ENCODE measurements at regions of chr17 and their contacts with region 1.

Region 1: DNA sequence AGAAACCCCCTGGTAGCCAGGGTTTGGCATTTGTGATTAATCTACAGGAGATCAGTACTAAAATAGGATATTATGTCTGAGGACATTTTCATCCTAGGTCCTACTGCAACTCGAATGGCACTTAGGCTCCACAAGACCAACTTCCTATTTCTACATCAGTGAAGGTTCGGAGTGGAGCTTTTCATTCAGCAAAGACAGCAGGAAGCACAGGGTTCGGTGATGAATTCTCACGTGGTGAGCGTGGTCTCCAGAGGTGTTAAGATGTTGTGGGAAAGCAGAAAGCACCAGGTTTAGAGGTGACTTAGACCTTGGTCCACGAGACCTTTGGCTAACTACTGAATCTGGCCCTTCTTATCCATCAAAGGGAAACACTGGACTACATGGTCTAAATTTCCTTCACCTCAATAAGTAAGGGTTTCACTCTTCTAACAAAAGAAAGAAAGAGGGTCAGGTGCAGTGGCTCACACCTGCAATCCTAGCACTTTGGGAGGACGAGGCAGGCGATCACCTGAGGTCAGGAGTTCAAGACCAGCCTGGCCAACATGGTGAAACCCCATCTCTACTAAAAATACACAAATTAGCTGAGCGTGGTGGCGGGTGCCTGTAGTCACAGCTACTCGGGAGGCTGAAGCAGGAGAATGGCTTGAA is 13.9 kb upstream of the HELZ start:
- DNase-seq: peak; percentile 59
- ATAC-seq: peak; percentile 64
- H3K4me3 Mint-ChIP-seq: peak overlapping the region; percentile 42
- H3K27ac Mint-ChIP-seq: peak overlapping the region; percentile 76
- H3K4me1 Mint-ChIP-seq: peaks cover 41% of the 10 kb centered on the region
- H3K27me3 Mint-ChIP-seq: peaks cover 8% of the 10 kb centered on the region

Region 2: DNA sequence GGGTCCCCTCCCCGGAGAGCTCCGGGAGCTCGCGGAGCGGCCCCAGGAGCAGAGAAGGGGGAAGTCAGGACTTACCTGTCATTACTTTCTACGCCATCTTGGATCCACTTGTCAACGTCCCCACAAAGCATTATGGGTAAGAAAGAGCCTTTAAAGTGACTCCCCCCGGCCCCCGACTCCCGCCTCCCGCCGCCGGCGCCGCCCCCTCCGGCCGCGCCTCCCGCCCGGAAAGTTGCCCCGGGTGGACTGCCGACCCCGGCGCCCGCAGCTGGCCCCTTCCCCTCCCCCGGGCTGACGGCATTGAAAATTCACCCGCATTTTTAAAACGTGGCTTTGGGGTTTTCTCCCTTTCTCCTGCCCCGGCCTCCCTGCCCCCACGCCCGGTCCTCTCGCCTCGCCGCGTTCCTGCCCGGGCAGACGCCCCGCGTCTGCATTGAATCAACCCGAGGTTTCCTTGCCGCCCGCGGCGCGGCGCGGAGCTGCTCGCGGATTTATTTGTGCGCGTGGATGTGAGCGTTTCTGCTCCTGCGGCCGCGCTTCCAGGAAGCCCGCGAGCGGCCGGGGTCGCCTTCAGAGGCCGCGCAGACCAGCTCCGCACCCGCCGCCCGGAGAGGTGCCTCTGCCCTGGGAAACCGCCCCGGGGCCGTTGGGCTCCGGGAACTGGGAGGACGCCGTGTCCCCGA is 13.7 kb before region 1 on chr17 and contains the start of gene HELZ:
- CTCF ChIA-PET with region 1: interaction called, 4 read pairs
- POLR2A ChIA-PET with region 1: interaction called, 12 read pairs
- DNase-seq: peak; percentile 80
- ATAC-seq: peak; percentile 79
- H3K4me3 Mint-ChIP-seq: peak within 1 kb of the TSS; percentile 93
- H3K27ac Mint-ChIP-seq: peak within 1 kb of the TSS; percentile 90
- H3K4me1 Mint-ChIP-seq: peaks cover 49% of the 10 kb centered on the region
- H3K27me3 Mint-ChIP-seq: no peaks in the 10 kb centered on the region
- total RNA-seq, gene HELZ: 69.1 to 76.6 TPM

Measured in activated CD8-positive, alpha-beta T cell treated with anti-CD3 and anti-CD28 coated beads, Interleukin-2, amount 10 ng/mL, durations not matched to agents 7 days and 5 days (primary cell).